Transverse colon (tissue), 4 donors: ENCODE measurements at regions of chr3 and their contacts with region 1.

Region 1: GRCh38 chr3:155960060-155960459 is 89.6 kb downstream of the GMPS start:
- DNase-seq: no peak
- H3K4me3 ChIP-seq: no peak overlapping the region
- H3K27ac ChIP-seq: no peak overlapping the region
- H3K4me1 ChIP-seq: no peaks in the 10 kb centered on the region
- H3K27me3 ChIP-seq: no peaks in the 10 kb centered on the region
- CTCF ChIP-seq: no peak
- EP300 ChIP-seq: no peak
- POLR2A ChIP-seq: no peak

Region 2: GRCh38 chr3:155804323-155804722 is 155.7 kb before region 1 on chr3:
- in situ Hi-C with region 1: no loop called
- intact Hi-C with region 1: no loop called
- DNase-seq: no peak
- H3K4me3 ChIP-seq: no peak overlapping the region
- H3K27ac ChIP-seq: no peak overlapping the region
- H3K4me1 ChIP-seq: peaks cover 0 to 10% (median 0%) of the 10 kb centered on the region in 4 donors
- H3K27me3 ChIP-seq: no peaks in the 10 kb centered on the region
- CTCF ChIP-seq: no peak
- EP300 ChIP-seq: no peak
- POLR2A ChIP-seq: no peak

Region 3: DNA sequence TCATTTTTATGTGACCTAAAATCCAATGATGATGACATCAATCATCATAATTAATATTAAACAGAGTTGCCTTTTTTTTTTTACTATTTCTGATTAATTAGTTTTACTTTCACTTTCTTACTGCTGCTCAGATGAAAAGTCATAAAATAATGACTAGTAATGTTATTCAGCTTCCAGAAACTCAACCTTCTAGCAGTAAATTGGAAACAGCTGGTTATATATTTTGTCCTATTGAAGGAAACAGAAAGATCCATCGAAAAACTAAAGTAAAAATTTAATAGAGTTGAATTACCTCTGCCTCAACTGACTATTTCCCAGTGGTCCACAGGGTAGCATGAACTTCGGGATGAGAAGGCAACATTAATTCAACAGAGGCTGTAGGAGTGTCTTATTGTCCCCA is 1369.5 kb after region 1 on chr3:
- in situ Hi-C with region 1: no loop called
- intact Hi-C with region 1: loop called (anchors 5 kb)
- DNase-seq: no peak
- H3K4me3 ChIP-seq: no peak overlapping the region
- H3K27ac ChIP-seq: no peak overlapping the region
- H3K4me1 ChIP-seq: no peaks in the 10 kb centered on the region
- H3K27me3 ChIP-seq: no peaks in the 10 kb centered on the region
- CTCF ChIP-seq: no peak
- EP300 ChIP-seq: no peak
- POLR2A ChIP-seq: no peak